CD8-positive, alpha-beta T cell (primary cell): ENCODE measurements at regions of chr19 and their contacts with region 1.

Region 1: DNA sequence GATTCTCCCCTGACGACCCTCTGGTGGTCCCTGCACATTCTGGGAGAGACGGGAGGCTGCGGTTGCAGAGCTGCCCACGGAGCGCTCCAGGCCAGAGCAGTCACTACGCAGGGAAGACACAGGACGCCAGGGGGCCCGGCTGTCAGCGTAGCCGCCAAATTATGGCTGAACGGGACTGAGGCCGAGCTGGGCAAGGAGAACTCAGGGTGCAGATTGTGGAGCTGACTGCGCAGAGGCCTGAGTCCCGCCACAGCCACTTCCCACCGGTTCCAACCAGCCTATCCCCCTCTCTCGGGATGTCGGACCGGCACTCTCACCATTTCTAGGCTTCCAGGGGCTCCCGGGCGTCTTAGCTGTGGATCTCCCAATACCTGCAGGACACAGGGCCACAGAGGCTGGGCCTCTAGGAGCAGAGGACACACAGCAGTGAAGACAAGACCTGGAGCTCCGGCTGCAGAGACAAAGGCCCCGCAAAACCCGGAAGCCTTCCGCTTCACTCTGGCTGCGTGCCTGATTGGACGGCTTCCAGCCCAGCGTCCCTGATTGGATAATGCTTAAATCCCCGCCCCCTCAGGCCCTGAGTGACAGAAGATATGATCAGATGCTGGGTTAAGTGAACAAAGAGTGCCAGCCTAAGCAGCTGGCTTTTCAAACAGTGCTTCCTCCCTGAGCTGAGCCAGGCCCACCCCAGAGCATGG is at the start of gene ZNF737:
- DNase-seq: peak; percentile 87 to 97 (median 93)
- ATAC-seq: peak; percentile 95
- H3K4me3 ChIP-seq: peak within 1 kb of the TSS; percentile 80 to 92
- H3K4me3 Mint-ChIP-seq: peak within 1 kb of the TSS; percentile 99
- H3K27ac ChIP-seq: peak within 1 kb of the TSS; percentile 81 to 91
- H3K27ac Mint-ChIP-seq: peak within 1 kb of the TSS; percentile 99
- H3K4me1 ChIP-seq: no peaks in the 10 kb centered on the region
- H3K4me1 Mint-ChIP-seq: peaks cover 35% of the 10 kb centered on the region
- H3K27me3 ChIP-seq: no peaks in the 10 kb centered on the region
- H3K27me3 Mint-ChIP-seq: no peaks in the 10 kb centered on the region
- CTCF ChIP-seq: no peak
- total RNA-seq, gene ZNF737: 11.2 to 11.5 TPM

Region 2: DNA sequence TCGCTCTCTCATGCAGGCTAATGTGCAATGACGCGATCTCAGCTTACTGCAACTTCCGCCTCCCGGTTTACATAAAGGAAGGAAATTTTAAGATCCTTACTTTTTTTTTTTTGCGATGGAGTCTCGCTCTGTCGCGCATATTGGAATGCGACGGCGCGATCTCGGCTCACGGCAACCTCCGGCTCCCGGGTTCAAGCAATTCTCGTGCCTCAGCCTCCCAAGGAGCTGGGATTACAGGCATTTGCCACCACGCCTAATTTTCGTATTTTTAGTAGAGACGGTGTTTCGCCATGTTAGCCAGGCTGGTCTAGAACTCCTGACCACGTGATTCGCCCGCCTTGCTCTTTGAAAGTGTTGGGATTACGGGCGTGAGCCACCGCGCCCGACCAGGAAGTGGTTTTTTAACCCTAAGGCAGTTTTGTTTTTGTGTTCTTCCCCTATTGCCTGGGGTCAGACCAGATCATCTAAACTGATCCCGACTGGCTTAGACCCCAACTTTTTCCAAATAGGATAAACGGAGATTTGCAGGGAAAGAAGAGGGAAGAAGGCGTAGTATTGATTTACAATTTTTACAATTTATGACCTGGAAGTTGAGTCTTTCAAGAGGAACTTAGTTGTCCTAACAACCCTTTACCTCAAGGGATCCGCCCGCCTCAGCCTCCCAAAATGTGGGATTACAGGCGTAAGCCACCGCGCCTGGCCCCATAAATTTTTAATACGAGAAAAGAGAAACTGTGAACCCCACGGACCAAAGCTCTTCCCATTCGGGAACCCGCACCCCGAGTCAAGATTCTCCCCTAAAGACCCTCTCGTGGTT is 141.9 kb before region 1 on chr19:
- CTCF ChIA-PET with region 1: no interaction called
- POLR2A ChIA-PET with region 1: interaction called, 16 read pairs
- intact Hi-C with region 1: loop called (anchors 2 to 10 kb)
- DNase-seq: peak in 7 of 9 experiments; percentile 4 to 62 (median 28)
- ATAC-seq: no peak
- H3K4me3 ChIP-seq: peak overlapping the region; percentile 52 to 88
- H3K4me3 Mint-ChIP-seq: peak overlapping the region; percentile 97
- H3K27ac ChIP-seq: peak overlapping the region; percentile 11 to 53
- H3K27ac Mint-ChIP-seq: peak overlapping the region; percentile 93
- H3K4me1 ChIP-seq: no peaks in the 10 kb centered on the region
- H3K4me1 Mint-ChIP-seq: peaks cover 8% of the 10 kb centered on the region
- H3K27me3 ChIP-seq: no peaks in the 10 kb centered on the region
- H3K27me3 Mint-ChIP-seq: no peaks in the 10 kb centered on the region
- CTCF ChIP-seq: no peak

Region 3: DNA sequence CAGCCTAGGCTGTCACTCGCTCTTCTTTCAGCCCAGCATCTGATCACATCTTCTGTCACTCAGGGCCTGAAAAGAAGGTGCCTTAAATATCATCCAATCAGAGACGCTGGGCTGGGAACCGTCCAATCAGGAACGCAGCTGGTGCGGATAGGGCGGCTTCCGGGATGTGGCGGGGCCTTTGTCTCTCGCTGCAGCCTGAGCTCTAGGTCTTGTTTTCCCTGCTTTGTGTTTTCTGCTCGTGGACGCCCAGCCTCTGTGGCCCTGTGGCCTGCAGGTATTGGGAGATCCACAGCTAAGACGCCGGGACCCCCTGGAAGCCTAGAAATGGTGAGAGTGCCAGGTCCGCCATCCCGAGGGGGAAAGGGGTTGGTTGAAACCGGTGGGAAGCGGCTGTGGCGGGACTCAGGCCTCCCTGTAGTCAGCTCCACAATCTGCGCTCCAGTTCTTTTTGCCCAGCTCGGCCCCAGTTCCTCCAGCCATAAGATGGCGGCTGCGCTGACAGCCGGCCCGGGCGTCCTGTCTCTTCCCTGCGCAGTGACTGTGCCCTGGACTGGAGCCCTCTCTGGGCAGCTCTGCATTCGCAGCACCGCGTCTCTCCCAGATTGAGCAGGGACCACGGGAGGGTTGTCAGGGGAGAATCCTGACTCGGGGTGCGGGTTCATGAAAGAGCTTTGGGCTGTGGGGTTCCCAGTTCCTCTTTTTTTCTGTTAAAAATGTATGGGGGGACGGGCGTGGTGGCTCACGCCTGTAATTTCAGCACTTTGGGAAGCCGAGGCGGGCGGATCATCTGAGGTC is 357.8 kb after region 1 on chr19 and contains the start of gene ZNF85:
- CTCF ChIA-PET with region 1: no interaction called
- POLR2A ChIA-PET with region 1: interaction called, 16 read pairs
- intact Hi-C with region 1: loop called in 1 of 2 experiments (anchors 10 kb)
- DNase-seq: peak; percentile 80 to 94 (median 90)
- ATAC-seq: peak; percentile 99
- H3K4me3 ChIP-seq: peak within 1 kb of the TSS; percentile 85 to 93
- H3K4me3 Mint-ChIP-seq: peak within 1 kb of the TSS; percentile 97
- H3K27ac ChIP-seq: peak within 1 kb of the TSS; percentile 82 to 88
- H3K27ac Mint-ChIP-seq: peak within 1 kb of the TSS; percentile 93
- H3K4me1 ChIP-seq: no peaks in the 10 kb centered on the region
- H3K4me1 Mint-ChIP-seq: peaks cover 23% of the 10 kb centered on the region
- H3K27me3 ChIP-seq: no peaks in the 10 kb centered on the region
- H3K27me3 Mint-ChIP-seq: no peaks in the 10 kb centered on the region
- CTCF ChIP-seq: no peak
- total RNA-seq, gene ZNF85: 3.7 to 4.9 TPM

Region 4: GRCh38 chr19:21396893-21397572 is 831.6 kb after region 1 on chr19 and contains the start of gene ZNF493:
- CTCF ChIA-PET with region 1: no interaction called
- POLR2A ChIA-PET with region 1: no interaction called
- intact Hi-C with region 1: loop called in 1 of 2 experiments (anchors 10 kb)
- DNase-seq: peak; percentile 82 to 96 (median 92)
- ATAC-seq: peak; percentile 99
- H3K4me3 ChIP-seq: peak within 1 kb of the TSS; percentile 73 to 95
- H3K4me3 Mint-ChIP-seq: peak within 1 kb of the TSS; percentile 97
- H3K27ac ChIP-seq: peak within 1 kb of the TSS; percentile 72 to 76
- H3K27ac Mint-ChIP-seq: peak within 1 kb of the TSS; percentile 94
- H3K4me1 ChIP-seq: peaks cover 15% of the 10 kb centered on the region
- H3K4me1 Mint-ChIP-seq: peaks cover 38% of the 10 kb centered on the region
- H3K27me3 ChIP-seq: no peaks in the 10 kb centered on the region
- H3K27me3 Mint-ChIP-seq: no peaks in the 10 kb centered on the region
- CTCF ChIP-seq: no peak
- total RNA-seq, gene ZNF493: 44.6 to 46.1 TPM